ENCODE measurements at regions of chr9 and their contacts with region 1.

Region 1: GRCh38 chr9:105205787-105206495 is 38.5 kb upstream of the SLC44A1 start:
- DNase-seq: peak in 4 of 5 donors; percentile 62 to 71 (median 69)
- ATAC-seq: peak; percentile 96 to 99 (median 97)
- H3K4me3 ChIP-seq: no peak overlapping the region
- H3K27ac ChIP-seq: peak overlapping the region in 11 of 12 donors; percentile 25 to 76 (median 58)
- H3K4me1 ChIP-seq: peaks cover 0 to 18% (median 7%) of the 10 kb centered on the region in 12 donors
- H3K27me3 ChIP-seq: no peaks in the 10 kb centered on the region
- CTCF ChIP-seq: no peak
- POLR2A ChIP-seq: no peak

Region 2: GRCh38 chr9:105341434-105342144 is 135.6 kb after region 1 on chr9:
- intact Hi-C with region 1: loop called in 1 of 10 experiments (anchors 10 kb)
- DNase-seq: no peak
- ATAC-seq: no peak
- H3K4me3 ChIP-seq: peak overlapping the region in 4 of 12 donors; percentile 0 to 36 (median 4)
- H3K27ac ChIP-seq: peak overlapping the region in 1 of 12 donors; percentile 59
- H3K4me1 ChIP-seq: peaks cover 0 to 28% (median 7%) of the 10 kb centered on the region in 12 donors
- H3K27me3 ChIP-seq: no peaks in the 10 kb centered on the region
- CTCF ChIP-seq: no peak
- POLR2A ChIP-seq: no peak

Region 3: DNA sequence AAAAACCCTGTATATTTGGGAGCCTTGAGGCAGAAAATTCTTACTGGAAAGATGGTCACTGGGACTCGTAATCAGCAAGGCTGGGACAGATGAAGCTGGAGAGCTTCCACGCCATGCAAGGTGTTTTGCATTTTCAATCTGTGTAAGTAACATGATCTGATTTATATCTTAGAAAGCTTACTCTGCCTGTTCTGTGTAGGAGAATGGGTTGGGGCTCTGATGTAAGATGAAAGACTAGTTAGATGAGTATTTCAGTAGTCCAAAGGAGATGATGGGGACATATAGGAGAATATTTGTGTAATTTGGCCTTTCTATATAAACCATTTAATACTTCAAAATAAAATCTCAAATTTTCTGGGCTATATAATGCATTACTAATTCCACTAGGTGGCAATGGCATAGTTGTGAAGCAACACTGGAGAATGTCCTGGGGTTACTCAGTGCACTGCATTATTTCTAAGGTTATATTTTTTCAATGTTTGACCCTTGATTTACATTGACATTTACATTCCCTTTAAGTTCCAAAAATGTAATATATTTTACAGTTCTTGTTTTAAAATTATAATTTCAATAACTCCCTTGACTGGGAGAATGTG is 220.0 kb after region 1 on chr9:
- intact Hi-C with region 1: no loop called
- DNase-seq: no peak
- ATAC-seq: peak in 2 of 4 donors; percentile 44 to 59
- H3K4me3 ChIP-seq: no peak overlapping the region
- H3K27ac ChIP-seq: no peak overlapping the region
- H3K4me1 ChIP-seq: no peaks in the 10 kb centered on the region
- H3K27me3 ChIP-seq: no peaks in the 10 kb centered on the region
- CTCF ChIP-seq: peak; percentile 31 to 67 (median 46)
- POLR2A ChIP-seq: no peak

Measured in heart left ventricle (tissue), 16 donors.